ENCODE measurements at regions of chr19 and their contacts with region 1.

Region 1: GRCh38 chr19:52962394-52963246 is at the start of gene ZNF816:
- DNase-seq: peak; percentile 98 to 99
- H3K4me3 ChIP-seq: peak within 1 kb of the TSS; percentile 64 to 77
- H3K27ac ChIP-seq: peak within 1 kb of the TSS; percentile 80 to 84
- H3K4me1 ChIP-seq: peaks cover 0 to 17% (median 6%) of the 10 kb centered on the region in 4 donors
- H3K27me3 ChIP-seq: no peaks in the 10 kb centered on the region
- CTCF ChIP-seq: no peak

Region 2: DNA sequence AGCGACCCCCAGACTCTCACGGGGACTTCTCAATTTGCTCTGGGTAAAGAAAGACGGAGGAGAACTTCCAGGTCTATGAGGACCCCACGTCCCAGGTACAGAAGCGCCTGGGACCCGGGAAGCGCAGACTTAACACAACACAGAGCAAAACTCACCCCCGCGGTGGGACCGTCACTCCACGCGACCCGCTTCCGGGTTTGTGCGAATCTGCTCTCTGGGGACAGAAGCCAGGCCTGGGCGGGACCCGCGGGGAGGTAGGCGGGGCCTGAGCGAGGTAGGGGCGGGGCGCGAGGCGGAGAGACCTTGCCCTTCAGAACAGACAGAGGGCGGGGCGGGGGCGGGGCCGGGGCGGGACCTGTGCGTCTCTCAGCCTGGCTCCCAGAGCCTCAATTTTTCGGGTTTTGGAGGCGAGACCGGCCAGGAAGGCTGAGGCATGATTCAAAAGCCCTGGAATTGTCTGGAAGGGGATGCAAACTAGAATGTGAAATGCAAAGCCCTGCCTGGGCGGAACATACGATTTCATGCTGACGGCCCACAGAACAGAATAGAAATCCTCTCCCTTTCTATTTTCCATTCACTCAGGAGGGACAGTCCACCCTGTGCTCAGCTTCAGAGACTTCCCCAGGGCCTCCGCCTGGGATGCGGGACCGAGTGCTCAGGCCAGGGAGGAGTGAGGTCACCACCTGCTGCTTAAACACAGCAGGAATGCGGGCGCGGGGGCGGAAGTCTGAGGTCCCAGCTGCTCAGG is 20.1 kb before region 1 on chr19:
- intact Hi-C with region 1: loop called (anchors 2 kb)
- DNase-seq: peak; percentile 89 to 97
- H3K4me3 ChIP-seq: peak overlapping the region; percentile 73 to 90
- H3K27ac ChIP-seq: peak overlapping the region; percentile 87 to 96
- H3K4me1 ChIP-seq: peaks cover 0 to 20% (median 9%) of the 10 kb centered on the region in 4 donors
- H3K27me3 ChIP-seq: no peaks in the 10 kb centered on the region
- CTCF ChIP-seq: no peak